SK-N-SH (cell line): ENCODE measurements at regions of chr9 and their contacts with region 1.

Region 1: GRCh38 chr9:6353851-6354686 is 25.9 kb downstream of the TPD52L3 start:
- DNase-seq: peak; percentile 70
- H3K4me3 ChIP-seq: no peak overlapping the region; a peak in 1 of 4 replicates
- H3K27ac ChIP-seq: no peak overlapping the region
- H3K4me1 ChIP-seq: peaks cover 0 to 8% of the 10 kb centered on the region in 2 experiments; a peak in 1 of 4 replicates
- H3K27me3 ChIP-seq: no peaks in the 10 kb centered on the region
- CTCF ChIP-seq: peak; percentile 82
- EP300 ChIP-seq: no peak
- RAD21 ChIP-seq: peak; percentile 89

Region 2: GRCh38 chr9:6566409-6567139 is 212.5 kb after region 1 on chr9:
- CTCF ChIA-PET with region 1: interaction called, 34 read pairs
- POLR2A ChIA-PET with region 1: no interaction called
- DNase-seq: no peak
- H3K4me3 ChIP-seq: peak overlapping the region; percentile 21 to 60; a peak in 3 of 4 replicates
- H3K27ac ChIP-seq: peak overlapping the region; percentile 47 to 100; a peak in 3 of 4 replicates
- H3K4me1 ChIP-seq: peaks cover 0 to 14% of the 10 kb centered on the region in 2 experiments; a peak in 3 of 4 replicates
- H3K27me3 ChIP-seq: no peaks in the 10 kb centered on the region
- CTCF ChIP-seq: no peak
- EP300 ChIP-seq: peak in 1 of 2 experiments; percentile 97; a peak in 2 of 4 replicates
- RAD21 ChIP-seq: no peak